Left lung (tissue), 14 donors: ENCODE measurements at regions of chr6 and their contacts with region 1.

Region 1: GRCh38 chr6:27081931-27082330 is 165.6 kb upstream of the PRSS16 start:
- DNase-seq: no peak
- ATAC-seq: no peak
- H3K4me3 ChIP-seq: no peak overlapping the region
- H3K27ac ChIP-seq: no peak overlapping the region
- H3K4me1 ChIP-seq: peaks cover 0 to 6% of the 10 kb centered on the region in 2 donors
- H3K27me3 ChIP-seq: peaks cover 6 to 35% of the 10 kb centered on the region in 2 donors
- CTCF ChIP-seq: no peak

Region 2: DNA sequence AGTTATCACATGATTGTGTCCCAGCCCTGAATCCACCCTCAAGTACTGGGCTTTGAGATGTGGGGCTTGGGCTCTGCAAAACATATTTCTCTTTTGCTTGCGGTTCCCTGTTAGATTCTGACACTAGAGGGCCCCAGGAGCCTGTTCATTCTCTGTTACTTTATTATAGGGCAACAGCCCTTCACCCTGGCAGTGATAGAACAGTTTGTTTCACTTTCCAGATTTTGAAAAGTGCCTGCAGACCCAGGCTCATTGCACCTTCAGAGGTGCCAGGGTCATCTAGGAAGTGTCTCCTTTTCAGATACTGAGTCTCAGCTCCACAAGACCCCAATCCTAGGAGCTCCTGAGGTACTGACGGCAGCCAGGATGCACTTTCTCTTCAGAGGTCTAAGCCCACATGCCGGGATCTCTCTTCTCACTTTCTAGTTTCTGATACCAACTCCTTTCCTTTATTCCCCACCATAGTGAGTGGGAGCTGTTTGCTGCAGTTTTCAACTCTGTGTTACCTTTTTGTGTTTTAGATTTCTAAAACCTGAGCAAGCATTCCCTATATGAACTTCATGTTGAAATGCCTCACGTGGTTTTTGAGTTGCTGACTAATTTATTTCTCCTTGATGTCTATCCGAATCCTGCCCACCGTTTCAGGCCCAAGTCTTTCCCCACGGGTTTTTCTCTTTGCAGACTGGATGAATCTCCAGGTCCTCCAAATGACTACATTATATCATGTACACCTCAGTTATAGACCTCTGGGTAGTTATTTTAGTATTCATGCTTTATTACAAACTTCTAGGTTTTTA is 474.3 kb before region 1 on chr6:
- intact Hi-C with region 1: loop called in 1 of 2 experiments (anchors 5 kb)
- DNase-seq: peak in 2 of 4 donors; percentile 38 to 58
- ATAC-seq: peak; percentile 93
- H3K4me3 ChIP-seq: peak overlapping the region; percentile 10 to 16
- H3K27ac ChIP-seq: no peak overlapping the region
- H3K4me1 ChIP-seq: no peaks in the 10 kb centered on the region
- H3K27me3 ChIP-seq: peaks cover 3 to 22% of the 10 kb centered on the region in 2 donors
- CTCF ChIP-seq: peak; percentile 58 to 65

Region 3: GRCh38 chr6:26743157-26743821 is 338.6 kb before region 1 on chr6:
- intact Hi-C with region 1: no loop called
- DNase-seq: no peak
- ATAC-seq: no peak
- H3K4me3 ChIP-seq: no peak overlapping the region
- H3K27ac ChIP-seq: no peak overlapping the region
- H3K4me1 ChIP-seq: no peaks in the 10 kb centered on the region
- H3K27me3 ChIP-seq: peaks cover 39 to 58% of the 10 kb centered on the region in 2 donors
- CTCF ChIP-seq: no peak

Region 4: GRCh38 chr6:27146706-27147505 is 65.0 kb after region 1 on chr6:
- intact Hi-C with region 1: no loop called
- DNase-seq: peak; percentile 86 to 98 (median 92)
- ATAC-seq: peak; percentile 93
- H3K4me3 ChIP-seq: peak overlapping the region; percentile 56 to 58
- H3K27ac ChIP-seq: peak overlapping the region; percentile 93 to 98
- H3K4me1 ChIP-seq: peaks cover 9 to 27% of the 10 kb centered on the region in 2 donors
- H3K27me3 ChIP-seq: no peaks in the 10 kb centered on the region
- CTCF ChIP-seq: no peak